B cell (primary cell): ENCODE measurements at regions of chr21 and their contacts with region 1.

Region 1: DNA sequence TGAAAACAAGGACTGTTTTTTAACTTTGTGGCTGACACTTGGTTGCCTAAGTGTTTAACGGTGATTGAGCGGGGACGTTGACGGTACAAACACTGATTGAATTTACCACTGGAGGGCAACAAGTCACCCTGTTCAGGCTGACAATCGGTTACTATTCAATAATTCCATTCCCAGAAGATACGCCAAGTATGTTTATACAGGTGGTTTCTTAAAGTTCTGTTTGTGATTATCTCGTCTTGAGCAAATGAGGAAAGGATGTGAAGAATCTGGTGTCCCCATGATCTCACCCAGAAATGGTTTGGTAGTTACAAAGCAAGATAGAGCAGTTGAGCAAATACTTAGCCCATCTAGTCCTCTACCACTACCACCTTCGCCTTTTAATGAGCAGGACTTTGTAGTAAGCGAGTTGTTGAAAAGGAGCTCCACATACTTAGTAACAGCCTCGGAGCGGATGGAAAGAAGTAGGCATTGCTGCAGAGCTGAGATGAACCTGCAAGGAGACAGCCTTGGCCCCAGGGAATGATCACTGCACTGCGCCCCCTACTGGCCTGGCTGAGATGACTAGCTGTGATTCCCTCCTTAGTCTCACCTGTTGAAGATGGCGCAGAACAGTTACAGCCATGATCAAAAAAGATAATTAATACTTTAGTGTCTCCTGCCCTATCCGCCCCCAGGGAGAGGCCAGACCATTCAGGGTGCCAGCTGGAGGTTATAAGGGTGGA is 36.3 kb downstream of the IFNAR1 start:
- DNase-seq: peak; percentile 89
- ATAC-seq: peak; percentile 79
- H3K4me3 ChIP-seq: peak overlapping the region; percentile 21 to 50 (median 49)
- H3K4me3 Mint-ChIP-seq: peak overlapping the region; percentile 89
- H3K27ac ChIP-seq: peak overlapping the region; percentile 81 to 93
- H3K27ac Mint-ChIP-seq: peak overlapping the region; percentile 96
- H3K4me1 ChIP-seq: peaks cover 37 to 41% of the 10 kb centered on the region in 2 donors
- H3K4me1 Mint-ChIP-seq: peaks cover 44% of the 10 kb centered on the region
- H3K27me3 ChIP-seq: no peaks in the 10 kb centered on the region
- H3K27me3 Mint-ChIP-seq: no peaks in the 10 kb centered on the region
- CTCF ChIP-seq: peak; percentile 90

Region 2: GRCh38 chr21:33205476-33205875 is 155.6 kb before region 1 on chr21:
- CTCF ChIA-PET with region 1: interaction called, 32 read pairs
- POLR2A ChIA-PET with region 1: interaction called, 10 read pairs
- intact Hi-C with region 1: loop called (anchors 2 kb)
- DNase-seq: peak; percentile 55
- ATAC-seq: peak; percentile 33
- H3K4me3 ChIP-seq: peak overlapping the region in 3 of 5 experiments; percentile 9 to 37 (median 36)
- H3K4me3 Mint-ChIP-seq: peak overlapping the region; percentile 76
- H3K27ac ChIP-seq: peak overlapping the region; percentile 70 to 79
- H3K27ac Mint-ChIP-seq: peak overlapping the region; percentile 89
- H3K4me1 ChIP-seq: peaks cover 48 to 51% of the 10 kb centered on the region in 2 donors
- H3K4me1 Mint-ChIP-seq: peaks cover 53% of the 10 kb centered on the region
- H3K27me3 ChIP-seq: no peaks in the 10 kb centered on the region
- H3K27me3 Mint-ChIP-seq: no peaks in the 10 kb centered on the region
- CTCF ChIP-seq: no peak

Region 3: GRCh38 chr21:33332143-33332542 is 28.9 kb before region 1 on chr21:
- CTCF ChIA-PET with region 1: interaction called, 28 read pairs
- POLR2A ChIA-PET with region 1: interaction called, 6 read pairs
- intact Hi-C with region 1: no loop called
- DNase-seq: peak; percentile 60
- ATAC-seq: peak; percentile 77
- H3K4me3 ChIP-seq: peak overlapping the region in 2 of 5 experiments; percentile 19 to 37
- H3K4me3 Mint-ChIP-seq: peak overlapping the region; percentile 59
- H3K27ac ChIP-seq: peak overlapping the region; percentile 57 to 79
- H3K27ac Mint-ChIP-seq: peak overlapping the region; percentile 67
- H3K4me1 ChIP-seq: peaks cover 58 to 71% of the 10 kb centered on the region in 2 donors
- H3K4me1 Mint-ChIP-seq: peaks cover 70% of the 10 kb centered on the region
- H3K27me3 ChIP-seq: no peaks in the 10 kb centered on the region
- H3K27me3 Mint-ChIP-seq: no peaks in the 10 kb centered on the region
- CTCF ChIP-seq: no peak

Region 4: DNA sequence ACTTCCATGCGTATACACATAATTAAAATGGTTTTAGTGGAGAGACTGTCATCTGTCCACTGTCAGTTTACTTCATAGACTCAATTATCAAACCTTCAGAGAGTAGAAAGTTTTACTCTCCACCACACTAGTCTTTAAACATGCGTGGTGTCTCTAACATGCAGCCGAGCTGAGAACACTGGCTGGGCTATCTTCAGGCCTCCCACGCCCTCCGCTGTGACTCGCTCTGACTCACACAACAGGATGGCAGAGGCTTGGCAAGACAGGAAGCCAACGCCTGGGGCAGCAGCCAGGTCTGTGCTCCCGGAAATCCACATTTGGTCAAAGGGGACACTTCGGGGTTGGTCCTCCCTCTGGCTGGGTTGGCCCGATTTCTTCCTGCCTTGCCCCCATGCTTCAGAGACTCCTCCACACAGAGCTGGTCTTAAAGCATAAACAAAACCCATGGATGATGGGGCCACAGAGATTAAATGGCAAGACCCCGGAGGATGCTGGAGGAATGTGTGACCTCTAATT is 19.5 kb after region 1 on chr21:
- CTCF ChIA-PET with region 1: interaction called, 93 read pairs
- POLR2A ChIA-PET with region 1: interaction called, 36 read pairs
- intact Hi-C with region 1: loop called (anchors 1 kb)
- DNase-seq: peak; percentile 79
- ATAC-seq: peak; percentile 59
- H3K4me3 ChIP-seq: peak overlapping the region in 1 of 5 experiments; percentile 23
- H3K4me3 Mint-ChIP-seq: peak overlapping the region; percentile 85
- H3K27ac ChIP-seq: peak overlapping the region; percentile 96
- H3K27ac Mint-ChIP-seq: peak overlapping the region; percentile 95
- H3K4me1 ChIP-seq: peaks cover 77 to 91% of the 10 kb centered on the region in 2 donors
- H3K4me1 Mint-ChIP-seq: peaks cover 82% of the 10 kb centered on the region
- H3K27me3 ChIP-seq: no peaks in the 10 kb centered on the region
- H3K27me3 Mint-ChIP-seq: no peaks in the 10 kb centered on the region
- CTCF ChIP-seq: no peak

Region 5: DNA sequence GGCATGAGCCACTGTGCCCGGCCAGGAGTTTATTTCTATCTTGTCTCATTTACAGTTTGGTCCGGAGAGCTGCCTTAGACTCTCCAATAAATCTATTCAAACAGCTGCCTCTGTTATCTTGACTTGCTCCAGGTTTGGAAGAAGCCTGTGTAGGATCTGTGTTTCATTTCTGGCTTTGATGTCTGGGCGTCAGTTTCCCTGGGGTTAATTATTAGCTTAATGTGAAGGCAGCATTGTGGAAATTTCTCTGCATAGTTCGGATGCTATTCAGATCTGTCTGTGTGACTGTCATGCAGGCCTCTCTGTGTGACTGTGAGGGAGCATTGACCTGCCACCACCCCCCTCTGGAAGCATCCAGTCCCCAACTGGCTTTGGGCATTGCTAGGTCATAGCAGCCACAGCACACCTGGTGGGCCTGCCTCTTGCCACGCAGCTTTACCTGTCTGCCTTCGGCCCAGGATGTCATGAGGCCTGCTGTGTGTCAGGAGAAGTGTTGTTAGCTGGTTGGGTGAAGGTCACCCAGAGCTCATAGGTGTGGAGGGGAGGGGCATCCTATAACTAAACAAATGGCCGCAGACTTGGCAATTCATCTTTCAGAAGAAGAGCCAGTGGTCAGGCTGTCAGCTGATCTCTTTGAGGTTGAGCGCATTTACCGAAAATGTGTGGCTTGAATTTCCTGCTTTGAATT is 51.9 kb after region 1 on chr21:
- CTCF ChIA-PET with region 1: interaction called, 109 read pairs
- POLR2A ChIA-PET with region 1: interaction called, 7 read pairs
- intact Hi-C with region 1: no loop called
- DNase-seq: no peak
- ATAC-seq: peak; percentile 36
- H3K4me3 ChIP-seq: peak overlapping the region in 2 of 5 experiments; percentile 9 to 46
- H3K4me3 Mint-ChIP-seq: peak overlapping the region; percentile 55
- H3K27ac ChIP-seq: peak overlapping the region; percentile 26 to 80
- H3K27ac Mint-ChIP-seq: peak overlapping the region; percentile 89
- H3K4me1 ChIP-seq: peaks cover 27 to 59% of the 10 kb centered on the region in 2 donors
- H3K4me1 Mint-ChIP-seq: peaks cover 59% of the 10 kb centered on the region
- H3K27me3 ChIP-seq: no peaks in the 10 kb centered on the region
- H3K27me3 Mint-ChIP-seq: no peaks in the 10 kb centered on the region
- CTCF ChIP-seq: no peak

Region 6: GRCh38 chr21:33441489-33442477 is 80.7 kb after region 1 on chr21:
- CTCF ChIA-PET with region 1: interaction called, 265 read pairs
- POLR2A ChIA-PET with region 1: interaction called, 17 read pairs
- intact Hi-C with region 1: loop called (anchors 1 kb)
- DNase-seq: peak; percentile 77
- ATAC-seq: peak; percentile 93
- H3K4me3 ChIP-seq: peak overlapping the region in 1 of 5 experiments; percentile 38
- H3K4me3 Mint-ChIP-seq: peak overlapping the region; percentile 71
- H3K27ac ChIP-seq: peak overlapping the region; percentile 88
- H3K27ac Mint-ChIP-seq: peak overlapping the region; percentile 96
- H3K4me1 ChIP-seq: peaks cover 56 to 65% of the 10 kb centered on the region in 2 donors
- H3K4me1 Mint-ChIP-seq: peaks cover 55% of the 10 kb centered on the region
- H3K27me3 ChIP-seq: no peaks in the 10 kb centered on the region
- H3K27me3 Mint-ChIP-seq: no peaks in the 10 kb centered on the region
- CTCF ChIP-seq: no peak